HAP-1 (cell line): ENCODE measurements at regions of chr1 and their contacts with region 1.

Region 1: DNA sequence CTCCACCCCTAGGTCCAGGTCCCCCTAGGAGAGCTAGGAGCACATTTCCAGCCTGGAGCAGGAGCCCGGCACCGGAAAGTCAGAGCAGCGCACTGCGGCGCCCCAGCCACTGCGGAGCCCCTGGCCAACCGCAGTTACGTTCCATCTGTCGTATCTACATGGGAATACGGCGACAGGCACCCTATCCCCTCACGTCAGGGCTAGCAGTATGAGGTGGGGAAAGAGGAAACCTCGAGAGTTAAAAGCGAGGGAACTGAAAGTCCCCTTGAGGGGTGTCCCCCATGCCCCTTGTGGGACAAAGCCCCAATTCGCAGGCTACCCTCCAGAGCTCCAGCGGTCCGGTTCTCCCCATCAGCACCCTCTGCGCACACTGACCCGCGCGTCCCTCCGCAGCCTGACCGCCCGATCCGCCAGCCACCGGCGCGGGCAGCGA is 995 bp downstream of the COLGALT2 start:
- DNase-seq: peak; percentile 56 to 84
- H3K4me3 ChIP-seq: peak overlapping the region; percentile 47
- H3K4me1 ChIP-seq: peaks cover 28% of the 10 kb centered on the region
- H3K27me3 ChIP-seq: no peaks in the 10 kb centered on the region

Region 2: DNA sequence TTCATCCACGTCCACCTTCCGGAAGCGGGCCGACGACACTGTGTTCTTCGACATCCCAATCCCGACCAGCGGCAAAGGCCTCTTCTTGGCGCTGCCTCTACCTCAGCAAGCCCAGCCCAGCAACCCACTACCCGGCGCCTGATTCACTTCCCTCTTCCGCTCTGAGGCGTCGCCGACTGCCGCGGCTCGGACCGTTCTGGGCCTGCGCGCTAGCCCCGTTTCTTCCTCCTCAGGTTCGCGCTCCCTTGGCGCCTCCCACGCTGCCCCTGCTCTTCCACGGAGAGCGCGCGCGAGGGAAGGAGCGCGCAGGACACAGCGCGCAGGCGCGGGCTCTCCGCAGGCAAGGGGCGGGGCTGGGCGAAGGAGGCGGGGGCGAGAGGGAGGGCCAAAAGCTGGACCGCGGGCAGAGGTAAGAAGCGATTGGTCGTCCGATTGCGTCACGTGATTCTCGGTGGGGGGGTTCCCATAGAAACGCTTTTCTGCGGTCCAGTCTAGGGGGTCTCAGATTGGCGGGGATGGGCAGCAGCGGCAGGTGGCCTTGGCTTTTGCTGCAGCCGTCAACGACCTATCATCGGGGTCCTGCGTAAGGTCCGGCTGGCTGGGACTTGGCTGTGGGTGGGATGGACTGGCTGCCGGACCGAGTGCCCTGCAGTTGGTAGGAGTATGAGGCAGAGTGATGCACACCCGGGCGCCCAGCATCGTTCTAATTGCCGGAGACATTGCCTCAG is 400.8 kb before region 1 on chr1 and contains the start of gene ARPC5:
- in situ Hi-C with region 1: loop called (anchors 25 kb)
- DNase-seq: peak; percentile 88 to 97
- H3K4me3 ChIP-seq: peak within 1 kb of the TSS; percentile 71
- H3K4me1 ChIP-seq: peaks cover 13% of the 10 kb centered on the region
- H3K27me3 ChIP-seq: peaks cover 4% of the 10 kb centered on the region

Region 3: DNA sequence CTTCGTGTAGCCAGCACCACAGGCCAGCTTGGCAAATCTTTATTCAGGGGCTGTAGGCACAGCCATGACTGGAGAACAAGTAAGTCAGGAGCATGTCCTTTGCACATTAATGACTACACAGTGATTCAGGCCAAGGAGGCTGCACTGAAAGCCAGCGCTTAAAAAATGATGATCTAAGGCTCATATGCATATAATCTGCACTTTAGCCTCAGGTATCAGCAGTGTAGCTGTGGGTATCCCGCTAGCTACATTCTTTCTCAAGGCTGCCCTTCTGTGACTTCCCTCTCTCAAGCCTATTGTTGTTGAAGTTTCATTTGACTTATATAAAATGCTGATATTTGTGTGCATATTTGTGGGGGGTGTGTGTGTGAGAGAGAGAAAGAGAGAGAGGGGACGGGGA is 294.2 kb before region 1 on chr1:
- in situ Hi-C with region 1: no loop called
- DNase-seq: no peak
- H3K4me3 ChIP-seq: no peak overlapping the region
- H3K4me1 ChIP-seq: no peaks in the 10 kb centered on the region
- H3K27me3 ChIP-seq: no peaks in the 10 kb centered on the region

Region 4: DNA sequence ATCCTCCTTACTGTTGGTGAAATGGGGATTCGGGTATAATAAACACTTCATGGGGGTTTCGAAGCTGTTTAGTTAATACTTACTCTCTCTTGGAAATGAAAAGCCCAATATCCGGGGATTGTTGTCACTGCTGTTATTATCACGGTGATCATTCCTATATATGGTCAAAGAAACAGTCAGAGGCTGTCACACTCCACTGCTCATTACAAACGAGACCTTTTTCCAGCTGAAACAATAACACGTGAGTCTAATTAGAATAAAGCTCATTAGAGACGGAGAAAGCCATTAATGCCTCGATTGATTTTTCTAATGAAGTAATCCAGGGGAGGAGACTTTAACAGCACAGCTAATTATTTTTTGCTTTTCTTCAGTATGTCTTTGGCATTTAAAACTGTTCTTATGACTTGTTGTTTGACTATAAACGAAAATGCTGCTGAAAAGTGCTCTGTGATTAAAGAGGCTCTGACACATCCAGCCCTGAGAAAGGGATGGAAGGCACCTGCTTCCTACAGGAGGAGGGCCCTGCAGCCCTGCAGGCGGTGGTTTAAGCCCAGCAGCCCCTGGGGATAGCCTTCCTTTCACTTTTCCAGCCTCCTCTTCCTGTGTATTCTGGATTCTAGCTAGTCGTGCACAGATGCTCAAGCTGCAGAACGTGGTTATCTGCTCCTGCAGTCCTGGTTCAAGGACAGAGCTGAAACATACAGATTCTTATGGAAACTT is 574.5 kb after region 1 on chr1:
- in situ Hi-C with region 1: no loop called
- DNase-seq: no peak
- H3K4me3 ChIP-seq: no peak overlapping the region
- H3K4me1 ChIP-seq: no peaks in the 10 kb centered on the region
- H3K27me3 ChIP-seq: no peaks in the 10 kb centered on the region